IMR-90 (cell line): ENCODE measurements at regions of chr6 and their contacts with region 1.

Region 1: DNA sequence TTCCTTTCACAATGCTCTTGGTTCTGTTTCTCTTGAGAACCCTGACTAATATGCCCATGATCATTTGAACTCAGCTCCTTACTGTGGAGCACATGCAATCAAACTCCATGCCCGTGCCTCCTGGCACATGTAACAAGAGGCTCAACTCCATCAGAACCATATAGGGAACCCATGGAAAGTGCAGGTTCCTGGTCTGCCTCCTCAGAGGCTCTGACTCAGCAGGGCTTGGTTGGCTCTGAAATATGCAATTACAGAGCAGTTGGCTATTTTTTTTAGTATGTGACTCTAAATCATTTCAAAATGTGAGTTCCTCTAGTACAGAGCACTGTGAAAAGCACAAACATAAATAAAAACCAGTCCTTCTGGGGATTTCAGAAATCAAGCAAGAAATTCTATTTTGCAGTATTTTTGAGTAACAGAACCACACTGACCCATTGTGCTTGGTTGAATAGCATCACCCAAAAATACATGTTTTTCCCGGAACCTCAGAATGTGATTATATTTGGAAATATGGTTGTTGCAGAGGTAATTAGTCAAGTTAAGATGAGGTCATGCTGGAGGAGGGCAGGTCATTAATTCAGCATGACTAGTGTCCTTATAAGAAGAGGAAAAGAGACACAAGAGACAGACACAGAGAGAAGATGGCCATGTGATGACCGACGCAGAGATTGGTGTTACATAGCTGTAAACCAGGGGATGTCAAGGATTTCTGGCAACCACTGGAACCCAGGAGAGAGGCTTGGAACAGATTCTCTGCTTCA is 13.2 kb upstream of the MAP3K4 start:
- DNase-seq: peak; percentile 68
- ATAC-seq: peak; percentile 56
- H3K4me3 ChIP-seq: no peak overlapping the region
- H3K27ac ChIP-seq: peak overlapping the region; percentile 10; the same call in 1 of the 2 replicates
- H3K4me1 ChIP-seq: peaks cover 24% of the 10 kb centered on the region
- H3K27me3 ChIP-seq: peaks cover 2% of the 10 kb centered on the region; the same call in 1 of the 2 replicates
- CTCF ChIP-seq: no peak
- POLR2A ChIP-seq: no peak
- RAD21 ChIP-seq: no peak

Region 2: DNA sequence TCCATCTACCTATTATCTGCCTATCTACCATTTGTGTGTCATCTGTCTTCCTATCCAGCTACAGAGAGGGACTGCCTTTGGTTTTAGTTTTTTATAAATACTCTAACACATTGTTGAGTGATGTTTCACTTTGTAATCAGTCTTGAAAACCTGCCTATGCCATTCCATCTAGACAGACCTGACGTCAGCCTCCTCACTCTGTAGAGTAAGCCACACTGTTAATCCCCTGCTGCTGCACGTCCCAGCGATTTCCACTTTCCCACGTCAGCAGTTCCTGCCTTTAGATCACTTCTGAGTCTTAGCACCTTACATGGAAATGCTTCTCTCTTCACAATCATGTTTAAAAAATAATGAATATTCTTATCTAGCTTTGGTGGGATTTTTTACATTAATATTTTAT is 221.4 kb before region 1 on chr6:
- CTCF ChIA-PET with region 1: no interaction called
- POLR2A ChIA-PET with region 1: no interaction called
- dilution Hi-C with region 1: no loop called
- in situ Hi-C with region 1: no loop called
- intact Hi-C with region 1: no loop called
- DNase-seq: no peak
- ATAC-seq: no peak
- H3K4me3 ChIP-seq: no peak overlapping the region
- H3K27ac ChIP-seq: no peak overlapping the region
- H3K4me1 ChIP-seq: no peaks in the 10 kb centered on the region
- H3K27me3 ChIP-seq: no peaks in the 10 kb centered on the region
- CTCF ChIP-seq: no peak
- POLR2A ChIP-seq: no peak
- RAD21 ChIP-seq: no peak

Region 3: DNA sequence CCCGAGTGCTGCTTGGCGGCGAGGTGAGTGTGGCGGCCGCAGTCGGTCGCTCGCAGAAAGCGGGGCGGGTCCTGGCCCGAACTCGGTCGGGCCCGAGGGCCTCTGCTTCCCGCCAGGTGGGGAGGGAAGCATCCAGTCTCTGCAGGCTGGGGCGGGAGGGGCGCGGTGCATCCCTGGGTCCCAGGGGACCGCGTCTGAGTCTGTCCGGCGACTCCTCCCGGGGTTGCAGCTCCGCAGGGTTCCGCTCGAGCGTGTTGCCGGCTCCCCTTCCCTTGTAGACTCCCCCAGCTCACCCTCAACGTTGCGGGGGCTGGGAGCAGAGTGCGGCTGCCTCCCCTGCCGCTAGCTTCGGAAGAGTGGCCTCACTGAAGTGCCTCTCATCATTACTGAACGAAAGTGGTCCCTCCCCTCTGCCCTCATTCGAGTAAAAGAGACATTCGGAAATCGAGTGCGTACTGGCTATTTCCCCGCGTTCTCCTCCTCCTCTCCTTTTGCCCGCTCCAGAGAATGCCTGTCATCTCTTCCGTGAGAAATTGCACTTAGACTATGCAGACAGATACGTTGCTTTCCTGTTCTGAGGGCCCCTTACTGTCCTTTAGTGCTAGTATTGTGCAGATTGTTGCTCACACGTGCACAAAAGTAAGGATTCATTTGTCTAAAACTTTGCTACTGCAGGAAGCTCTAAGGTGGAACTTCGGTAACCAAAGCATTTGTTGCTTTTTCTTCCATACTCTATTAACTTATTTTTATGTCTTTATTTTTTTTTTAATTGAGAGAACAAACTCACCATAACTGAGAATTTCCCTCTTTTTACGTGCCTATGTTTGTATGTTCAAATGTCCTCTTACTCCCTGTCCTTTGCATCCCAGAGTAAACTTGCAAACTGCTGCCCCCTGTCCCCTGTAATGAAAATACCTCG is 14.0 kb after region 1 on chr6:
- CTCF ChIA-PET with region 1: interaction called, 6 read pairs
- POLR2A ChIA-PET with region 1: no interaction called
- dilution Hi-C with region 1: no loop called
- in situ Hi-C with region 1: no loop called
- intact Hi-C with region 1: loop called (anchors 1 kb)
- DNase-seq: peak; percentile 70
- ATAC-seq: peak; percentile 57
- H3K4me3 ChIP-seq: peak overlapping the region; percentile 95
- H3K27ac ChIP-seq: peak overlapping the region; percentile 84
- H3K4me1 ChIP-seq: no peaks in the 10 kb centered on the region; the same call in 1 of the 2 replicates
- H3K27me3 ChIP-seq: no peaks in the 10 kb centered on the region
- CTCF ChIP-seq: peak; percentile 63
- POLR2A ChIP-seq: peak; percentile 80; the same call in 1 of the 2 replicates
- RAD21 ChIP-seq: peak; percentile 67

Region 4: GRCh38 chr6:162442687-162443086 is 1464.4 kb after region 1 on chr6:
- CTCF ChIA-PET with region 1: no interaction called
- POLR2A ChIA-PET with region 1: no interaction called
- dilution Hi-C with region 1: no loop called
- in situ Hi-C with region 1: no loop called
- intact Hi-C with region 1: no loop called
- DNase-seq: no peak
- ATAC-seq: no peak
- H3K4me3 ChIP-seq: no peak overlapping the region
- H3K27ac ChIP-seq: no peak overlapping the region
- H3K4me1 ChIP-seq: no peaks in the 10 kb centered on the region
- H3K27me3 ChIP-seq: no peaks in the 10 kb centered on the region
- CTCF ChIP-seq: no peak
- POLR2A ChIP-seq: no peak
- RAD21 ChIP-seq: no peak

Region 5: GRCh38 chr6:162785632-162786242 is 1807.4 kb after region 1 on chr6:
- CTCF ChIA-PET with region 1: no interaction called
- POLR2A ChIA-PET with region 1: no interaction called
- dilution Hi-C with region 1: no loop called
- in situ Hi-C with region 1: no loop called
- intact Hi-C with region 1: no loop called
- DNase-seq: no peak
- ATAC-seq: no peak
- H3K4me3 ChIP-seq: no peak overlapping the region
- H3K27ac ChIP-seq: no peak overlapping the region
- H3K4me1 ChIP-seq: no peaks in the 10 kb centered on the region
- H3K27me3 ChIP-seq: no peaks in the 10 kb centered on the region
- CTCF ChIP-seq: no peak
- POLR2A ChIP-seq: no peak
- RAD21 ChIP-seq: no peak